ENCODE measurements at regions of chr1 and their contacts with region 1.

Region 1: GRCh38 chr1:33460947-33461629 is 11.4 kb upstream of the ZSCAN20 start:
- DNase-seq: peak; percentile 80
- H3K4me3 ChIP-seq: peak overlapping the region; percentile 51
- H3K27ac ChIP-seq: peak overlapping the region; percentile 69
- H3K4me1 ChIP-seq: peaks cover 42% of the 10 kb centered on the region
- CTCF ChIP-seq: no peak

Region 2: GRCh38 chr1:32773018-32773763 is 687.9 kb before region 1 on chr1:
- CTCF ChIA-PET with region 1: no interaction called
- POLR2A ChIA-PET with region 1: no interaction called
- intact Hi-C with region 1: no loop called
- DNase-seq: peak; percentile 75
- H3K4me3 ChIP-seq: no peak overlapping the region
- H3K27ac ChIP-seq: peak overlapping the region; percentile 15
- H3K4me1 ChIP-seq: no peaks in the 10 kb centered on the region
- CTCF ChIP-seq: peak; percentile 99

Region 3: DNA sequence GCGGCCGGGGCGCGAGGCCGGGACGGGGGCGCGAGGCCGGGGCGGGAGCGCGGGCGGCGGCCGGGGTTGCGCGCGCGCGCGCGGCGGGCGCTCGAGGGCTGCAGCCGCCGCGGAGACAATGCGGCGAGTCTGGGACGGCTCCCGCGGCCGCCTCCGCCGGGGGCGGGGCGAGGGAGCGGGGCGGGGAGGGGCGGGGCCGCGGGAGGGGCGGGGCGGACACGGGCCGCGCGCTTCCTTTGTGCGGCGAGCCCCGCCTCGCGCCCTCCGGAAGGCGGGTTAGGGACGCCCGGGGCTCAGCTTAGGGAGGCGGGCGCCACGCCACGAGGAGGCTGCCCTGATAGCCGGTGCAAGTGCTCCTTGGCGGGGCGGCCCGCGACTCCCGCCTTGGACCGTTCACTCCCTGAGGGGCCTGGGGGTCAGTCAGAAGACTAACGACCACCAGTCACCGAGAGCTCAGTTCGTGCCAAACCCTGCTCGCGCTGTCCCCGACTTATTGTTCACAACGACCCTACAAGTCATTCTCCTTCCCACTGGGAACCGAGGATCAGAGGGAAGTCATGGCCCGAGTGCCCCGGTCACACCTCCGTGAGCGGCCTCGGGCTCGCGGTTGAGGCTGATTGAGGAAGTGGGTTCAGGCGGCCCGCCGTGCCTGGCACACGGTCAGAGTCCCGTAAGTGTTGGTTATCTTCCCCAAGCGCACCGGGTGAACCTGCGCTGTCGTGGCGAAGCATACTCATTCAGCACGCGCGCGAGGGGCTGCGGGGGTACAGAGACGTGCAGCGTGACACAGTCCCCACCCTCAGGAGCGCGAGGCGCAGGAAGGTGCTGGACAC is 111.1 kb before region 1 on chr1:
- CTCF ChIA-PET with region 1: no interaction called
- POLR2A ChIA-PET with region 1: no interaction called
- intact Hi-C with region 1: loop called (anchors 5 kb)
- DNase-seq: peak; percentile 91
- H3K4me3 ChIP-seq: peak overlapping the region; percentile 76
- H3K27ac ChIP-seq: peak overlapping the region; percentile 40
- H3K4me1 ChIP-seq: peaks cover 35% of the 10 kb centered on the region
- CTCF ChIP-seq: no peak

Region 4: GRCh38 chr1:33517596-33518250 is 56.6 kb after region 1 on chr1:
- CTCF ChIA-PET with region 1: no interaction called
- POLR2A ChIA-PET with region 1: no interaction called
- intact Hi-C with region 1: no loop called
- DNase-seq: no peak
- H3K4me3 ChIP-seq: no peak overlapping the region
- H3K27ac ChIP-seq: no peak overlapping the region
- H3K4me1 ChIP-seq: no peaks in the 10 kb centered on the region
- CTCF ChIP-seq: no peak

Region 5: DNA sequence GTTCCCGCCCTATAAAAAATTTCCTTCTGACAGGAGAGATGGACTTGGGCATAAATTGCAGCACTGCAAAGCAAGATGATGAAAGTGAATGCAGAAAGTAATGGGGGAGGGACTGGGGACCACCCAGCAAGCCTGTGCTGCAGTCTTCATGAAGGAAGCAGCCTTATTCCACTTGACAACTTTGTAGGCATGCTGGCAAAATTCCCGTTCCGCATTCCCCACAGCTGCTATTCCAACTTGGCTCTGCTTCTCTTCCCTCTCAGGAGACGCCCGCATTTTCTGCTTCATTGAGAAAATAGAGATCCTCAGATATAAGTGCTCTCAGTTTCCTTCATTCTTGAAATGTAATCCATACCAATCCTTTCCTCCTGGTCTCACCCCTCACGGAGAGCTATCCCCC is 405.2 kb after region 1 on chr1:
- CTCF ChIA-PET with region 1: no interaction called
- POLR2A ChIA-PET with region 1: no interaction called
- intact Hi-C with region 1: no loop called
- DNase-seq: no peak
- H3K4me3 ChIP-seq: no peak overlapping the region
- H3K27ac ChIP-seq: no peak overlapping the region
- H3K4me1 ChIP-seq: no peaks in the 10 kb centered on the region
- CTCF ChIP-seq: no peak

Region 6: DNA sequence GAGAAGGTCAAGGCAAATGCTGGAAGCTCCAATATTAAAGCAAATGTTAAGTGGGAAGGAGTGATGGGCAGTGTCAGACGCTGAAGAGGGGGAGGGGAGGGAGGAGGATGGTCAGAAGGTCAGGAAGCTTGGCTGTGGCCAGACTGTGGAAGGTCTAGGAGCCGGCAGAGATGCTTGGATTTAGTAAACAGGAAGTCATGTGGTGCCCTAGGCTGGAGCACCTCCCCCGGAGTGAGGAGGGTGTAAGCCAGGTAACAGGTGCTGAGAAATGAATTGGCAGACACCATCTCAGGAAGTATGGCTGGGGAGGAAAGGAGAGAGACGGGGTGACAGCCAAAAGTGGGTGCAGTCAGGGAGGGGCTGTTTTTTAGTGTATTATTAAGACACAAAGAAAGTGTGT is 686.2 kb after region 1 on chr1:
- CTCF ChIA-PET with region 1: no interaction called
- POLR2A ChIA-PET with region 1: no interaction called
- intact Hi-C with region 1: no loop called
- DNase-seq: no peak
- H3K4me3 ChIP-seq: no peak overlapping the region
- H3K27ac ChIP-seq: no peak overlapping the region
- H3K4me1 ChIP-seq: no peaks in the 10 kb centered on the region
- CTCF ChIP-seq: no peak